GM10248 (cell line): ENCODE measurements at regions of chr17 and their contacts with region 1.

Region 1: GRCh38 chr17:14098224-14098623 is 28.9 kb downstream of the COX10 start:
- DNase-seq: no peak
- CTCF ChIP-seq: no peak

Region 2: GRCh38 chr17:12431188-12431587 is 1667.0 kb before region 1 on chr17:
- CTCF ChIA-PET with region 1: no interaction called
- POLR2A ChIA-PET with region 1: interaction called, 18 read pairs
- DNase-seq: peak; percentile 58
- CTCF ChIP-seq: no peak